Activated T-helper 1 cell treated with anti-CD3 and anti-CD28 coated beads, Interleukin-12 subunit alpha, Interleukin-12 subunit beta, Interleukin-2, Interleukin-4 antibody, amounts not matched to agents 30 ng/mL and 10 ng/mL and 1 ng/mL, durations not matched to agents 14 hours and 24 hours and 36 hours (primary cell): ENCODE measurements at regions of chr17 and their contacts with region 1.

Region 1: GRCh38 chr17:57747221-57748017 is 2.3 kb upstream of the CCDC182 start:
- DNase-seq: peak; percentile 10
- H3K4me3 Mint-ChIP-seq: no peak overlapping the region
- H3K27ac Mint-ChIP-seq: no peak overlapping the region
- H3K4me1 Mint-ChIP-seq: peaks cover 4% of the 10 kb centered on the region
- H3K27me3 Mint-ChIP-seq: peaks cover 24% of the 10 kb centered on the region

Region 2: DNA sequence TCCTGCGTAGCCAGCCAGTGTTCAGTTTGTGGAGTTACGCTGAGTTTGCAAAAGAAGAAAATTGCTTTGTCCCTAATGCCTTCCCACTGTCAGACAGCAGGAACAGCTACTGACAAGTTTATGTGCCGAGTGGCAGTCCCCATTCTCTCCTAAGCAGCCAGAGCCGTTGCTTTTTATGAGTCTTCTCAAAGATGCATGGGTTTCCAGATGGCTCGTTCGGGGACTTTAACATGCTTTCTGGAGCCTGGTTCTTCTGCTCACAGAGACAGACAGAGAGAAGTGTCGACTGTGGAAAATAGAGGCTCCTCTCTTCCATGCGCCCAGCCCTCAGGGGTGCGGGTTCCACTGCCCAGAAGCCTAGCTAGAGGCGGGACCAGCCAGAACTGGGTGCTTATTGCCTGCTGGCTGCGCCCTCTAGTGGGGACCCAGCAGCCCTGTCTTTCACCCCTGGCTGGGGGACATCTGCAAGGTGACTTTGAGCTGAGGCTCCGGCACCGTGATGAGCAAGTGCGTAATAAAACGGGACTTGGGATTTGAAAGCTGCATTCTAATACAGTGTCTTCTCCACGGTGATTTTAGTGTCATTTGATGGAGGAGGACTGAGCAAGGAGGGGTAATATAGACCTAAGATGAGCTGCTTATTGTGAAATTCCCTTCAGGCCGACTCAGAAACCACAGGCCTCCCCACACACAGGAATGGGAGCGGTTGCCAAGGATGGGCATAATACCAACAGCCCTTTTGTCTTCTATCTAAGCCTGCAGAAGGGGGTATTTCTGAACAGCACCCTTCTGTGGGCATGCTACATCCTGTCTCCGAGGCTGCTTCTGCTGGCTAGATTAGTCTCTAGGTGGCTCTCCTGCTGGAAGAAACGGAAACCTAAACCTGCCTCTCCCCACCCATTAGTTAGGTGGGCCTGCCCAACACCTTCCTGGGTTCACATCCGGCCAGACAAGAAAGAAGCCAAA is 75.5 kb before region 1 on chr17:
- intact Hi-C with region 1: loop called (anchors 5 kb)
- DNase-seq: peak; percentile 55
- H3K4me3 Mint-ChIP-seq: no peak overlapping the region
- H3K27ac Mint-ChIP-seq: no peak overlapping the region
- H3K4me1 Mint-ChIP-seq: peaks cover 27% of the 10 kb centered on the region
- H3K27me3 Mint-ChIP-seq: no peaks in the 10 kb centered on the region

Region 3: GRCh38 chr17:57724026-57724728 is 23.2 kb before region 1 on chr17:
- intact Hi-C with region 1: no loop called
- DNase-seq: no peak
- H3K4me3 Mint-ChIP-seq: no peak overlapping the region
- H3K27ac Mint-ChIP-seq: no peak overlapping the region
- H3K4me1 Mint-ChIP-seq: no peaks in the 10 kb centered on the region
- H3K27me3 Mint-ChIP-seq: peaks cover 8% of the 10 kb centered on the region

Region 4: GRCh38 chr17:58270476-58271215 is 523.2 kb after region 1 on chr17:
- intact Hi-C with region 1: no loop called
- DNase-seq: no peak
- H3K4me3 Mint-ChIP-seq: no peak overlapping the region
- H3K27ac Mint-ChIP-seq: no peak overlapping the region
- H3K4me1 Mint-ChIP-seq: no peaks in the 10 kb centered on the region
- H3K27me3 Mint-ChIP-seq: peaks cover 7% of the 10 kb centered on the region